Activated naive CD4-positive, alpha-beta T cell treated with anti-CD3 and anti-CD28 coated beads, Interleukin-2, amount 10 ng/mL, durations not matched to agents 7 days and 5 days (primary cell): ENCODE measurements at regions of chr4 and their contacts with region 1.

Region 1: GRCh38 chr4:94406668-94407437 is 44.9 kb upstream of the PDLIM5 start:
- DNase-seq: peak; percentile 66
- H3K4me3 Mint-ChIP-seq: no peak overlapping the region
- H3K27ac Mint-ChIP-seq: no peak overlapping the region
- H3K4me1 Mint-ChIP-seq: no peaks in the 10 kb centered on the region
- H3K27me3 Mint-ChIP-seq: peaks cover 5% of the 10 kb centered on the region

Region 2: DNA sequence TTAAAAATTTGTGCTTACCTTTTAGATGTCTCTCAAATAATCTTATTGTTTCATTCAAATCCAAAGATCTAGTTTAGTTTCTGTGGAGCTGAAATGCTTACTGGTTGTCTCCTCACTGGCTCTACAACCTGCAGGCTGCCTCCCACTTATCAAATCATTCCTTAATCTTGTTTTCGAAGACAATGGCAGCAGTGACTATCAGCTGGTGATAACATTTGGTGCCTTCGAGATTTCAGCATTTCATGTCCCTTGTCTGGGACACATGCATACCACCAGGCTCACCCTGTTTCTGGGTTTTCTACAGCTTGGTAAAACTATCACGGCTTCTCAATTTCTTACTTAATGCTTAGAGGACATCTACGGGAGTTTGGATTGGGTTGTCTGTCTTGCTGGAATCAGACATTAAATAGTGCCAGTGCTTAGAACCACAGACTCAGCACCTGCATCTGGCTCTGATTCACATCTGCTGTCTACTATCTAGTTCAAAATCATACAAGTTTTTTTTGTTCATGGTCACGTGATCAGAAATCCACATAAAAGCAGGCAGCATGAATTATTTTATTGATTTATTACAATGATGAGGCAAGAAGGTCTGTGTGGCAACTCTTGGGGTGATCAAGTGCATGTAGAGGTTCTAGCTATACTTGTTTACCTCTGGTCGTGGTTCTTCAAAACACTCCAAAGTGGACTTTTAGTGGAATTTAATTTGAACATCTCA is 231.1 kb before region 1 on chr4:
- CTCF ChIA-PET with region 1: no interaction called
- DNase-seq: no peak
- H3K4me3 Mint-ChIP-seq: no peak overlapping the region
- H3K27ac Mint-ChIP-seq: no peak overlapping the region
- H3K4me1 Mint-ChIP-seq: no peaks in the 10 kb centered on the region
- H3K27me3 Mint-ChIP-seq: peaks cover 4% of the 10 kb centered on the region

Region 3: DNA sequence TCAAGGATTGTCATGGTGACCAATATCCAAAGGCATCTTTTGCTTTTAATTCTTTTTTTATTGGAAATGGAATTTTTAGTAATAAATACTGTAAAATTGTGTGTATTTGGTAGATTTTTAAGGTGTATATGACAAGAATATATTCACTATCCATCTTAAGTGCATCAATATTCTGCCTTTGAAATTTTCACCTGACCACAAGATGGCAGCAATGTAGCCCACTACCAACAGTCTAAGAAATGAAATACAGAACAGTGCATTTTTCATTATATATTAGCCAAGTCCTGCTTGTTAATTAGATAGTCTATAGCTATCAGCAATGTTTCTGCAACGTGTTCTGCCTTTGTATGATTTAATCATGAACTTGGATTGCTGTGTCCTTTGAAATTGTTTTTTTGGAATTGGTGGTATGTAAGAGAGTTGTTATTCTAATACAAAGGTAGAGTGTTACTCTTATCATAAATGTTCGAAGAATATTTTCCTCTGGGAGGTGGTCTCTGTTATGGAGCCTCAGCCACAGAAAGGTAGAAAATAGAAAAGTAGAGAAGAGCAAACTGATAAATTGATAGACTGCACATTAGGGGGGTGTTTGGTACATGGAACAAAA is 102.4 kb before region 1 on chr4:
- CTCF ChIA-PET with region 1: interaction called, 11 read pairs
- DNase-seq: peak; percentile 29
- H3K4me3 Mint-ChIP-seq: no peak overlapping the region
- H3K27ac Mint-ChIP-seq: no peak overlapping the region
- H3K4me1 Mint-ChIP-seq: no peaks in the 10 kb centered on the region
- H3K27me3 Mint-ChIP-seq: no peaks in the 10 kb centered on the region

Region 4: DNA sequence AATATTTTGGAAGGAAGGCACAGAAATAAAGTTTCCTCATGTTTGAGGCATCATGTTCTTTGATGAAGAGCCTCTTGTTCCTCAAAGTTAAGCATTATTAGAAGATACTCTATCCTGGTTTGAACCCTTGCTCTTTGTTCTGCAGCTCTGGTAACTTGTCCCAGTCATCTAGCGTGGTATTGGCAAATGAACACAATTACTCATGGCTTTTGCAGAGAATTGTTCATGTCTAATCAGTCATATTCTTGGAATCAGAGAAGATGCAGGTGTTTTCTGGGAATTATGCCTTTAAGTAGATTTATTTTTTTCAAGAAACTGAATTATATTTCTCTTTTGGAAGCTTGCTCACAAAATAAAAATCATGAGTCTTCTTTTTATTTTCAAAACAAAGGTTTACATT is 11.3 kb before region 1 on chr4:
- CTCF ChIA-PET with region 1: interaction called, 10 read pairs
- DNase-seq: no peak
- H3K4me3 Mint-ChIP-seq: no peak overlapping the region
- H3K27ac Mint-ChIP-seq: no peak overlapping the region
- H3K4me1 Mint-ChIP-seq: no peaks in the 10 kb centered on the region
- H3K27me3 Mint-ChIP-seq: no peaks in the 10 kb centered on the region

Region 5: DNA sequence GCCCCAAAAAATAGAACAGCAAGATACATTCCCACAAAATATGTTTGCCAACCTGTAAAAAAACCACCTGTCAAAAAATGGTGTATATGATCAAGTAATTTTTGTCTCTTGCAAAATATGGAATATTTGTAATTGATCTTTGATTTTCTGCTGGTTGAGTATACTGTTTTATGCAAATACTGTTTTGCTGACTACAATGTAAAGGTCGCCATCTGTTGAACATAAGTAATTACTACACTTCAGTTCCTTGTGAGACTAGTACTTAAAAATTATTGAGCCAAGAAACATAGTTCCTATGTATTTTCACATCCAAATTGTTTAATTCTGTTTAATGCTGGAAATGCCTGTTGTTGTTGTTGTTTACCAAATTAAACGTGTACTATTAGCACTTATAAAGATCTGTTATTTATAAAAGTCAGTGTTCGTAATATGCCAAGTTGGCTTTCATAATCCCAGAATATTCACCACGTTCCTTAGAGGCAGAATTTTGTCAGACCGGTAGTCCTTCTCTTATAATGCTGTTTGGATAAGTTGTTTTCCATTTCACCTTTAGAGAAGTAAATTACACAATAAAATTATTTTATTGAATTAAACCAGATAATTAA is 189.1 kb after region 1 on chr4:
- CTCF ChIA-PET with region 1: interaction called, 11 read pairs
- DNase-seq: no peak
- H3K4me3 Mint-ChIP-seq: no peak overlapping the region
- H3K27ac Mint-ChIP-seq: no peak overlapping the region
- H3K4me1 Mint-ChIP-seq: no peaks in the 10 kb centered on the region
- H3K27me3 Mint-ChIP-seq: no peaks in the 10 kb centered on the region